ENCODE measurements at regions of chr21 and their contacts with region 1.

Region 1: GRCh38 chr21:38470762-38471161 is 27.5 kb downstream of the ERG start:
- DNase-seq: peak; percentile 90
- H3K4me3 Mint-ChIP-seq: no peak overlapping the region
- H3K27ac Mint-ChIP-seq: peak overlapping the region; percentile 30
- H3K4me1 Mint-ChIP-seq: peaks cover 19% of the 10 kb centered on the region
- H3K27me3 Mint-ChIP-seq: no peaks in the 10 kb centered on the region
- CTCF ChIP-seq: no peak

Region 2: GRCh38 chr21:38438476-38438893 is 32.3 kb before region 1 on chr21:
- CTCF ChIA-PET with region 1: no interaction called
- POLR2A ChIA-PET with region 1: interaction called, 3 read pairs
- intact Hi-C with region 1: loop called (anchors 5 kb)
- DNase-seq: peak; percentile 90
- H3K4me3 Mint-ChIP-seq: no peak overlapping the region
- H3K27ac Mint-ChIP-seq: peak overlapping the region; percentile 10
- H3K4me1 Mint-ChIP-seq: peaks cover 28% of the 10 kb centered on the region
- H3K27me3 Mint-ChIP-seq: no peaks in the 10 kb centered on the region
- CTCF ChIP-seq: no peak

Region 3: DNA sequence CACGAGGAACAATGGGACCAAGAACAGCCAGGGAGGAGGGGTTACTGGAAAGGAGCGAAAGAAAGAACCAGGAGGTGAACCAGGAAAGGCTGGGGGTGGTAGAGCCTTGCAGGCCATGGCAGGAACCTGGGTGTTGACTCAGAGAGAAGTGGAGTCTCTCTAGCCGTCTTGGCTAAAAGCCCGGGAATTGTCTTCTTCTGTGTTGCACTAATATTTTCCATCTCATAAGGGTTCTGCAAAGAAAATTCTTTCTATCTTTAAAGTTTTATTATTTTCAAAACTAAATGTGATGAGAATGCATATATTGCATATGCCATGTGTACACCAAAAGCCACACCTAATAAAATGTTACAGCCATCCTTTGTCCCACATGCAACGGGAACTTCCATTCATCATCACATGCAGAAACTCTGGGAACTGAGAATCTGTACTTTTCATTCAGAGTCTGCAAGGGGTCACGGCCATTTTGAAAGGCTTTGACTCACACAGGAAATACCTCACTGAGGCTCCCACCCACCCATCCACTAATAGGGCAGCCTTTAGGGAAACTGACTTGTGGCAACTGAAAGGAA is 10.5 kb before region 1 on chr21:
- CTCF ChIA-PET with region 1: interaction called, 5 read pairs
- POLR2A ChIA-PET with region 1: interaction called, 27 read pairs
- intact Hi-C with region 1: no loop called
- DNase-seq: peak; percentile 98
- H3K4me3 Mint-ChIP-seq: peak overlapping the region; percentile 41
- H3K27ac Mint-ChIP-seq: peak overlapping the region; percentile 25
- H3K4me1 Mint-ChIP-seq: peaks cover 28% of the 10 kb centered on the region
- H3K27me3 Mint-ChIP-seq: no peaks in the 10 kb centered on the region
- CTCF ChIP-seq: no peak

Measured in MCF 10A (cell line).